HepG2 (cell line): ENCODE measurements at regions of chr13 and their contacts with region 1.

Region 1: GRCh38 chr13:87669379-87670125 is 1.6 kb upstream of the SLITRK5 start:
- DNase-seq: peak; percentile 9
- ATAC-seq: no peak
- H3K4me3 ChIP-seq: no peak overlapping the region
- H3K27ac ChIP-seq: no peak overlapping the region
- H3K4me1 ChIP-seq: 0 out of 2 replicates have a peak, but pooled peaks cover 5% of the 10 kb centered on the region
- H3K27me3 ChIP-seq: peaks cover 0 to 14% of the 10 kb centered on the region in 2 experiments; a peak in 4 of 5 replicates
- CTCF ChIP-seq: peak; percentile 52; the same call in 1 of the 2 replicates
- EP300 ChIP-seq: no peak
- POLR2A ChIP-seq: no peak
- RAD21 ChIP-seq: no peak

Region 2: GRCh38 chr13:87259551-87259954 is 410.0 kb before region 1 on chr13:
- CTCF ChIA-PET with region 1: no interaction called
- POLR2A ChIA-PET with region 1: no interaction called
- in situ Hi-C with region 1: no loop called
- intact Hi-C with region 1: loop called (anchors 5 kb)
- DNase-seq: peak; percentile 8
- ATAC-seq: peak; percentile 97
- H3K4me3 ChIP-seq: no peak overlapping the region
- H3K27ac ChIP-seq: no peak overlapping the region
- H3K4me1 ChIP-seq: no peaks in the 10 kb centered on the region
- H3K27me3 ChIP-seq: no peaks in the 10 kb centered on the region
- CTCF ChIP-seq: peak; percentile 44
- EP300 ChIP-seq: no peak
- POLR2A ChIP-seq: no peak
- RAD21 ChIP-seq: no peak

Region 3: GRCh38 chr13:87851410-87851809 is 181.9 kb after region 1 on chr13:
- CTCF ChIA-PET with region 1: no interaction called
- POLR2A ChIA-PET with region 1: no interaction called
- in situ Hi-C with region 1: no loop called
- intact Hi-C with region 1: no loop called
- DNase-seq: no peak
- ATAC-seq: no peak
- H3K4me3 ChIP-seq: no peak overlapping the region
- H3K27ac ChIP-seq: no peak overlapping the region
- H3K4me1 ChIP-seq: no peaks in the 10 kb centered on the region
- H3K27me3 ChIP-seq: no peaks in the 10 kb centered on the region; a peak in 1 of 5 replicates
- CTCF ChIP-seq: no peak
- EP300 ChIP-seq: no peak
- POLR2A ChIP-seq: no peak
- RAD21 ChIP-seq: no peak